CD4-positive, alpha-beta T cell (primary cell): ENCODE measurements at regions of chr4 and their contacts with region 1.

Region 1: DNA sequence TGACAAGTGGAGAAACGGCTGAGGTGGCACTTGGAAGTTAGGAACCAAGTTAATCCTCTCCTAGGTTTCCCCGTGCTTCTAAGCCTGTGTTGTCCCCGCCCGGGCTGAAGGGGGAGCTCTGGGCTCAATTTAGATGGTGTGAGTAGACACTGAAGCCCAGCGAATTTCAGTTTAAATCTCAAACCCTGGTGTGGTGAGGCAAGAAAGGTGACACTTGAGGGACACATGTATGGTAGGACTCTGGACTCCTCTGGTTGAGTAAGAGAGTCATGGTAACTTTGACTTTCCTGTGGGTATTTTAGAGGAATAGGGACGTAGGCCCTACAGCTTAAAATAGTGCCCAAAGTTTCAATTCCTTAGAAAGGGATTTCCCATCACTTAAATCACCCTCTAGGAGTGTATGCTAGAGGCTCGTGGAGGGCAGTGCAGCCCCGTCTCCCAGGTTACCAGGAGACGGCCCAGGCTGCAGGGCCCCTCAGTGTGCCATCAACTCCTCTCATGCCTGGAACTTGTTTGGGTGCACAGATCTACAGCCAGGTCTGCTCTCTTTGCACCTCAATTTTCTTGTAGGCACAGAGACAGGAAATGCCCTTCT is 24.0 kb downstream of the HAND2 start:
- DNase-seq: peak in 7 of 14 experiments; percentile 19 to 66 (median 41)
- ATAC-seq: peak; percentile 48
- H3K4me3 ChIP-seq: peak overlapping the region; percentile 29
- H3K4me3 Mint-ChIP-seq: peak overlapping the region; percentile 20
- H3K27ac ChIP-seq: no peak overlapping the region
- H3K27ac Mint-ChIP-seq: no peak overlapping the region
- H3K4me1 ChIP-seq: peaks cover 47% of the 10 kb centered on the region
- H3K4me1 Mint-ChIP-seq: peaks cover 53% of the 10 kb centered on the region
- H3K27me3 ChIP-seq: peaks cover 88 to 99% of the 10 kb centered on the region in 2 experiments
- H3K27me3 Mint-ChIP-seq: peaks cover 97% of the 10 kb centered on the region
- CTCF ChIP-seq: no peak

Region 2: DNA sequence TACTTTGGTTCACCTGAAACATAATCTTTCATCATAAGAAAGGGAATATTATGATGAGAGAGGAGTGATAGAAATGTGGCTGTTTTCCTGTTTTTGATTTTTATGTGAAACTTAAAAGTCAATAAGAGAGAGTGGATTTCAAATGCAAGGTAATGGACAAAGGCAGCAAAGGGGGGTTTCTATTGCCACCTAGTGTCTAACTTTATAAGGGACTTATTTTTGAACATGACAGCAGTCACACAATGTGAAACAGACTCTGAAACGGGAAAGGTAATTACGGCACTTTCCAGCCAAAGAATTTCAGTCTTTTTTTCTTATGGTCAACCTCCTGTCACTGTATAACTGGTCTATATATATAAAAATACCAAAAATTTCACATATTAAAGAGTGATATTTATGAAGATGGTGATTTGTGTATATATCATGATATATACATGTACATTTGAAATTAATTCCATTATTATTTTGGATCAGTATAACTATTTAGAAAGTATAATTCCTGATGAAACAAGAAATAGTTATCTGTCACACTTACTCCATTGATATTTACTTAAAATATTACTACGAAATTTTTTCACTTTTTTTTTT is 650.3 kb after region 1 on chr4:
- CTCF ChIA-PET with region 1: no interaction called
- POLR2A ChIA-PET with region 1: no interaction called
- intact Hi-C with region 1: loop called (anchors 10 kb)
- DNase-seq: peak in 3 of 14 experiments; percentile 18 to 30 (median 26)
- ATAC-seq: no peak
- H3K4me3 ChIP-seq: no peak overlapping the region
- H3K4me3 Mint-ChIP-seq: no peak overlapping the region
- H3K27ac ChIP-seq: no peak overlapping the region
- H3K27ac Mint-ChIP-seq: no peak overlapping the region
- H3K4me1 ChIP-seq: no peaks in the 10 kb centered on the region
- H3K4me1 Mint-ChIP-seq: no peaks in the 10 kb centered on the region
- H3K27me3 ChIP-seq: peaks cover 0 to 11% of the 10 kb centered on the region in 2 experiments
- H3K27me3 Mint-ChIP-seq: peaks cover 50% of the 10 kb centered on the region
- CTCF ChIP-seq: peak; percentile 62

Region 3: DNA sequence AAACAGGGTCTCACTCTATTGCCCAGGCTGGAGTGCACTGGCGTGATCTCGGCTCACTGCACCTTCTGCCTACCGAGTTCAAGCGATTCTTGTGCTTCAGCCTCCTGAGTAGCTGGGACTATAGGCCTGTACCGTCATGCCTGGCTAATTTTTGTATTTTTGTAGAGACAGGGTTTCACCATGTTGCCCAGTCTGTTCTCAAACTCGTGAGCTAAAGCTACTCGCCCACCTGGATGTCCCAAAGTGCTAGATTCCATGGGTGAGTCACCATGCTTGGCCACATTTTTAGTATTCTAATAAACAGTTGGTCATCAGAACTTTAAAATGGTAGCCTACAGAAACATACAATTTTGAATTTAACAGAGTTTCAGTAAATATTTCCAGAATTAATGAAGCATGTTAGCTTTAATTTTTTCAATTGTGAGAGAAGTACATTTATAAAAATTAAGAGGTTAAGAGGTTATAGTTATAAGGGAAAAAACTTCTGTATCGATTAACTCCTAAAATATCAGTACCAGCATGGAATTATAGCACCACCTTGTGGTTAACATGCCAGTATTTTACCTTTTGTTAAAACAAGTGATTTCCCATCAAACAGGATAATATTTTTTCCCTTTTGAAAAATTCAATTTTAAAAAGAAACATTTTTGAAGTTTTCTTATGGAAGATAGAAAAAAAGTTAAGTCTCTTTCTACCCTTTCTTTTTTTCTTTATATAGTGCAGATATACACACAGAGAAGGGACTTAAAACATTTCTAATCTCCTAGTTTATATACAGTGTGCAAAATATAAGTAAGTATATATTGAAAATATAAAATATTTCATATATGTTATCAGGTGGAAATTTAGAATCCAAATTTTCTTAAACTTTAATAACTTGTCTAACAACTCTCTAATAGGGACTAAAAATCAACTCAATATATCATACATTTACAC is 813.1 kb after region 1 on chr4:
- CTCF ChIA-PET with region 1: no interaction called
- POLR2A ChIA-PET with region 1: no interaction called
- intact Hi-C with region 1: loop called in 1 of 2 experiments (anchors 10 kb)
- DNase-seq: peak in 3 of 14 experiments; percentile 47 to 62 (median 52)
- ATAC-seq: no peak
- H3K4me3 ChIP-seq: no peak overlapping the region
- H3K4me3 Mint-ChIP-seq: no peak overlapping the region
- H3K27ac ChIP-seq: no peak overlapping the region
- H3K27ac Mint-ChIP-seq: no peak overlapping the region
- H3K4me1 ChIP-seq: no peaks in the 10 kb centered on the region
- H3K4me1 Mint-ChIP-seq: no peaks in the 10 kb centered on the region
- H3K27me3 ChIP-seq: no peaks in the 10 kb centered on the region
- H3K27me3 Mint-ChIP-seq: no peaks in the 10 kb centered on the region
- CTCF ChIP-seq: peak; percentile 83